SK-N-SH (cell line): ENCODE measurements at regions of chr2 and their contacts with region 1.

Region 1: DNA sequence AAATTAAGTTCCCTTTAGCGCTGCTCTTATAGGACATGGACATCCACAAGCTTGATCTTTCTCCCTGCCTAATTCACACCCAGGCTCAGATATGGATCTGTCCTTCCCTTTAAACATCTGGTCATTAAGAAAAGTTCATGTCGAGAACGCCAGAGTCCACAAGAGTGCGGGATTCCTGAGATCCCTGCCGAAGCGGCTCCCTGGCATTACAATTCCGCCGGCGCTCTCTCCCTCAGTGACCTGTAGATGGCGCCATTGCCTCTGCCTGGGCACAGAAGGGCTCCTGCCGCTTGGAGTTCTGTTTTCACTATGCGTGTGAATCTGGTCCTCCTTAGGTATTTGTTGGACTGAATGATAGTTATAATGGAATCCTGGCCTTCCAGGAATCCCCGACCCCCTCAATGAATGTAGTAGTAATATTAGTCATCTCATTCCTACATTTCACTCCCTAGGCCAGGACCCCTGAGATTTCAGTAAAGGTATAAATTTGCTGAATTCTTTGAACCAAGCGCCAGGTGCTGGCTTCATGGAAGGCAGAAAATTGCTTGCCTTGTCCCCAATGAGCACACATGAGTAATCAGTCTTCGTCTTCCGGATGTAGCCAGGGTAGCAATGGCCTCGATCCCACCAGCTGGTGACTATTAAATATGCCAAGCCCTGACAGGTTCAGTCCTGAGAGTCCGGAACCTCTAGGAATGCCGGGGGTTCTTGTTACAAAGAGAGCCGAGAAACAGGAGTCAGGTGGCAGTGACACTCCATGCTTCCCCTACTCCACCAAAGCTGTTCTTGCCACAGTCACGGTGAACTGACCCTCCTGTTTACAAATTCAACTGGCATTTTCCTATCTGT is 26.4 kb upstream of the CD207 start:
- DNase-seq: peak; percentile 85
- H3K4me3 ChIP-seq: peak overlapping the region in 1 of 2 experiments; percentile 30; a peak in 1 of 4 replicates
- H3K27ac ChIP-seq: no peak overlapping the region
- H3K4me1 ChIP-seq: peaks cover 0 to 3% of the 10 kb centered on the region in 2 experiments; a peak in 1 of 4 replicates
- H3K27me3 ChIP-seq: 0 out of 2 replicates have a peak, but pooled peaks cover 8% of the 10 kb centered on the region
- CTCF ChIP-seq: peak; percentile 99
- EP300 ChIP-seq: no peak
- RAD21 ChIP-seq: peak; percentile 93

Region 2: GRCh38 chr2:70381831-70382267 is 480.2 kb before region 1 on chr2:
- CTCF ChIA-PET with region 1: no interaction called
- POLR2A ChIA-PET with region 1: no interaction called
- DNase-seq: peak; percentile 32
- H3K4me3 ChIP-seq: no peak overlapping the region
- H3K27ac ChIP-seq: no peak overlapping the region
- H3K4me1 ChIP-seq: peaks cover 0 to 5% of the 10 kb centered on the region in 2 experiments; a peak in 1 of 4 replicates
- H3K27me3 ChIP-seq: no peaks in the 10 kb centered on the region; the same call in 1 of the 2 replicates
- CTCF ChIP-seq: no peak
- EP300 ChIP-seq: no peak
- RAD21 ChIP-seq: no peak

Region 3: DNA sequence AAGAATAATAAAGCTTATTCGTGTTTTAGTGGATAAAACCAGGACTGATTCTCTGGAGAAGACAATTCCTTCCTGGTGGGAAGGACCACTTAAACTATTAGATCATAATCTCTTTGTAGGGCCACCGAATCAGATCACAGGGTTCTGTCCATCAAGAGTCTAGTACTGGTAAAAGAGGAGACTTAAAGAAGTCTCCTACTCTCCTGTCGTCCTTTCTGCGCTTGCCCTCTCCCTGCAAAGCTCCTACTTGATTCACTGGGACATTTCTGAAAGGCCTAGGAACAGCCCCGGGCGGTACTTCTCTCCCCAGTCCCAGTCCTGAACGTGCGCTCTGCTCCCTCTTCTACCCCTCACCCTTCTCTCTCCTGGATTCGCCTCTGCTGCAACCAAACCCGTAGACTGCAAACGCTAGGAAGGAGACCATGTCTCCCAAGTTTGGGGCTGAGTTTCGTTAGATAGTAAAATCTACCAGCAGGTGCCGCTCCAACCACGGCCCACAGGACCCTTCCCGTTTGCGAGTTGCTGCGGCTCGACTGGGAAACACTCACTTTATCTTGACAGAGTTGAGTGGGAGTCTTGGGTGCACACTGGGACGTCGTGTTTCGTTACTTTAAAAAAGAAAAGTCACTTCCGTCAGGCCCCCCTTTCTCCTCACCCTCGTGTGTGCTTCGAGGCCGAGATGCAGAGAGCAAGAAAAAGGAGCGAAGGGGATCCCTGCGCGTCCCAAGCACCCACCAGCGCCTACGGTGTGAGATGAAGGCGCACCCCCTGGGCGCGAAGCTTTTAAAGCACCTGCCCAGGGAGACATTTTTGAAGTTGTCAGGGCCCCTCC is 72.5 kb before region 1 on chr2:
- CTCF ChIA-PET with region 1: interaction called, 41 read pairs
- POLR2A ChIA-PET with region 1: no interaction called
- DNase-seq: peak; percentile 81
- H3K4me3 ChIP-seq: peak overlapping the region; percentile 26 to 55
- H3K27ac ChIP-seq: no peak overlapping the region
- H3K4me1 ChIP-seq: peaks cover 0 to 9% of the 10 kb centered on the region in 2 experiments; a peak in 1 of 4 replicates
- H3K27me3 ChIP-seq: peaks cover 44% of the 10 kb centered on the region
- CTCF ChIP-seq: peak; percentile 69
- EP300 ChIP-seq: no peak
- RAD21 ChIP-seq: peak; percentile 83

Region 4: DNA sequence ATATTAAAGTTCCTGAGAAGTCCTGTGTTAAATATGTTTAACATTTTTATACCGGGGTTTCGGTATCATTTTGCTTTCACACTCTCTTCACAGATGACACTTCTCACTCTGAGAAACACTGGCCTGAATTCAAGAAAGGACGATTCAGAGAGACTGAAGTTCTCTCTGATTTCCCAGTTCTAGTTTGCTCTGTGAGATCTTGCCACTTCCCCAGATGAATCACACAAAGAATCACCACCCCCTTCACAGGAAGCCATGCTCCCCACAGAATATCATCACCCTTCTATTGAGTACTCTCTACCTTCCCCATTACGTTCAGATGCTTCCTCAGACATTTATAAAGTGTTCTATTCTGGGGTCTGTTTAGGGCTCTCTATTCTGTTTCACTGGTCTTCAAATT is 10.3 kb before region 1 on chr2:
- CTCF ChIA-PET with region 1: interaction called, 11 read pairs
- POLR2A ChIA-PET with region 1: no interaction called
- DNase-seq: no peak
- H3K4me3 ChIP-seq: no peak overlapping the region
- H3K27ac ChIP-seq: no peak overlapping the region
- H3K4me1 ChIP-seq: no peaks in the 10 kb centered on the region
- H3K27me3 ChIP-seq: no peaks in the 10 kb centered on the region; the same call in 1 of the 2 replicates
- CTCF ChIP-seq: no peak
- EP300 ChIP-seq: no peak
- RAD21 ChIP-seq: no peak

Region 5: GRCh38 chr2:70919672-70920366 is 57.8 kb after region 1 on chr2:
- CTCF ChIA-PET with region 1: interaction called, 46 read pairs
- POLR2A ChIA-PET with region 1: no interaction called
- DNase-seq: peak; percentile 83
- H3K4me3 ChIP-seq: no peak overlapping the region; a peak in 1 of 4 replicates
- H3K27ac ChIP-seq: no peak overlapping the region
- H3K4me1 ChIP-seq: no peaks in the 10 kb centered on the region
- H3K27me3 ChIP-seq: no peaks in the 10 kb centered on the region
- CTCF ChIP-seq: peak; percentile 93
- EP300 ChIP-seq: no peak
- RAD21 ChIP-seq: peak; percentile 82

Region 6: GRCh38 chr2:70954886-70955285 is 92.9 kb after region 1 on chr2:
- CTCF ChIA-PET with region 1: interaction called, 11 read pairs
- POLR2A ChIA-PET with region 1: no interaction called
- DNase-seq: no peak
- H3K4me3 ChIP-seq: no peak overlapping the region
- H3K27ac ChIP-seq: no peak overlapping the region
- H3K4me1 ChIP-seq: no peaks in the 10 kb centered on the region
- H3K27me3 ChIP-seq: no peaks in the 10 kb centered on the region
- CTCF ChIP-seq: no peak
- EP300 ChIP-seq: no peak
- RAD21 ChIP-seq: no peak

Region 7: DNA sequence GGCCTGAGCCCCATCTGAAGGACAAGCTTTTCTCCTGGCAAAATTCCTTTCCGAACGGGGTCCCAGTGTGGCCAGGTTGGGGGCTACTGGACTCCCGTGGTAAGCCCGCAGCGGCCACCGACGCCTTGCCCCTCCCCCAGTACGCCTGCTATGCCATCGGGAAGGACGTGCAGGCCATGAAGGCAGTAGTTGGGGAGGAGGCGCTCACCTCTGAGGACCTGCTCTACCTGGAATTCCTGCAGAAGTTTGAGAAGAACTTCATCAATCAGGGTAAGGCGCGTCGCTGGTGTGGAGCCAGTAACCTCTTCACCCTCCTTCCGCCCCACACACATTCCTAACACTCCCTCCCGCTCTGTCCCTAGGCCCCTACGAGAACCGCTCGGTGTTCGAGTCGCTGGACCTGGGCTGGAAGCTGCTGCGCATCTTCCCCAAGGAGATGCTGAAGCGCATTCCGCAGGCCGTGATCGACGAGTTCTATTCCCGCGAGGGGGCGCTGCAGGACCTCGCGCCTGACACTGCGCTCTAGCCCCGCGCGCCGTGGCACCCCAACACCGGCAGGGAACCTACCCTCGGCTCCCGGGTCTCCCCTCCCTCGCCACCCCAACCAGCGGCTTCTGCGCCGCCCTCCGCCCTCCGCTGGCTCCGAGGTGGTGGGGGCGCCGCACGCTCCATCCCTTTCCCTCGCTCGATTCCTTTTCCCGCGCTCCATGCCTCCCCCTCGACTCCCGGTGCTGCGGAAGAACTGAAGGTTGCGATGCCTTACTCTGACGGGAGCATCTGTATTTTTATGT is 102.8 kb after region 1 on chr2:
- CTCF ChIA-PET with region 1: interaction called, 12 read pairs
- POLR2A ChIA-PET with region 1: no interaction called
- DNase-seq: peak; percentile 84
- H3K4me3 ChIP-seq: peak overlapping the region; percentile 39 to 58
- H3K27ac ChIP-seq: no peak overlapping the region
- H3K4me1 ChIP-seq: no peaks in the 10 kb centered on the region; a peak in 1 of 4 replicates
- H3K27me3 ChIP-seq: no peaks in the 10 kb centered on the region
- CTCF ChIP-seq: peak; percentile 64
- EP300 ChIP-seq: no peak
- RAD21 ChIP-seq: peak; percentile 62

Region 8: DNA sequence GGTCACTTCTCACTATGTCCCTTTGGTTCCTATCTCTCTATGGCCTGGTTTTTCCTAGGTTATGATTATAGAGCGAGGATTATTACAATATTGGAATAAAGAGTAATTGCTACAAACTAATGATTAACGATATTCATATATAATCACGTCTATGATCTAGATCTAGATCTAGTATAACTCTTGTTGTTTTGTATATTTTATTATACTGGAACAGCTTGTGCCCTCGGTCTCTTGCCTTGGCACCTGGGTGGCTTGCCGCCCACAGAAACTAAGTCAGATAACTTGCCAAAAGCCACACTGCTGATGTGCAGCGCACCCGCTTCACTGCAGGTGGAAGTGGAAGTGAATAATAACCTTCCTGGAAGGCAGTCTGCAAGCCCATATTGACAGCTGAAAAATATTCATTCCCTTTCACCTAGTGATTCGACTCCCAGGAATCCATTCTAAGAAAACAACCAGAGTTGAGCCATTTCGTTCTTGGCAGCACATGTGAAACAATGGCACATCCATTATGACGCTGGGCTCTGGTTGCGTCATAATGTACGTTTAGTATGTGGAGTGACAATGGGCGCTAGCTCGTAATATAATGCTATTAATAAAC is 115.7 kb after region 1 on chr2:
- CTCF ChIA-PET with region 1: interaction called, 18 read pairs
- POLR2A ChIA-PET with region 1: no interaction called
- DNase-seq: peak; percentile 7
- H3K4me3 ChIP-seq: peak overlapping the region; percentile 61 to 88
- H3K27ac ChIP-seq: peak overlapping the region in 1 of 2 experiments; percentile 87; a peak in 2 of 4 replicates
- H3K4me1 ChIP-seq: peaks cover 3 to 6% of the 10 kb centered on the region in 2 experiments; a peak in 3 of 4 replicates
- H3K27me3 ChIP-seq: no peaks in the 10 kb centered on the region
- CTCF ChIP-seq: no peak
- EP300 ChIP-seq: no peak
- RAD21 ChIP-seq: no peak